Left ventricle myocardium inferior (tissue), 1 donor: ENCODE measurements at regions of chr5 and their contacts with region 1.

Region 1: GRCh38 chr5:39547553-39548154 is 122.9 kb upstream of the DAB2 start:
- DNase-seq: no peak
- H3K4me3 ChIP-seq: peak overlapping the region; percentile 3
- H3K27ac ChIP-seq: peak overlapping the region; percentile 51
- H3K4me1 ChIP-seq: peaks cover 15% of the 10 kb centered on the region
- H3K27me3 ChIP-seq: no peaks in the 10 kb centered on the region
- CTCF ChIP-seq: peak; percentile 78

Region 2: DNA sequence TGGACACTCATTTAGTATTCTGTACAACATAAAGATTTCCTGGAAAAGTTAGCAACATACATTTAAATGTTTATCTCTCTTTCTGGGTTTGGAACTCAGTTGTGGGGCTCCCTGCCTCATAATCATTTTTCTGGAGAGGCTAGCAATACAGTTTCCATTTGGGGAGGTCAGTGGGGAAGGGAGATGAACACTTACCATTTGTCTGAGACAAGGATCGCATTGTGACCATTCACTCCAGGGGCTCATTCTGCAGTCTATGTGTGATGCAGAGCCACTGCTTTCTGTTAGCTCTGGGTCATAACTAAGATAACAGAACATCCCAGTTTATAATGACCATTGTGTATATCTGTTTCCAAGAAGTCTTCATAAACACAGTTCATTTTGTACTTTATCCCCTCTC is 205.8 kb before region 1 on chr5:
- intact Hi-C with region 1: no loop called
- DNase-seq: no peak
- H3K4me3 ChIP-seq: no peak overlapping the region
- H3K27ac ChIP-seq: no peak overlapping the region
- H3K4me1 ChIP-seq: no peaks in the 10 kb centered on the region
- H3K27me3 ChIP-seq: no peaks in the 10 kb centered on the region
- CTCF ChIP-seq: no peak

Region 3: GRCh38 chr5:39424736-39425637 is 122.7 kb before region 1 on chr5 and contains the start of gene DAB2:
- intact Hi-C with region 1: loop called (anchors 10 kb)
- DNase-seq: peak; percentile 89
- H3K4me3 ChIP-seq: peak within 1 kb of the TSS; percentile 73
- H3K27ac ChIP-seq: peak within 1 kb of the TSS; percentile 90
- H3K4me1 ChIP-seq: peaks cover 63% of the 10 kb centered on the region
- H3K27me3 ChIP-seq: peaks cover 40% of the 10 kb centered on the region
- CTCF ChIP-seq: peak; percentile 64
- total RNA-seq, gene DAB2: 28.5 TPM